CD4-positive, alpha-beta memory T cell (primary cell): ENCODE measurements at regions of chr4 and their contacts with region 1.

Region 1: DNA sequence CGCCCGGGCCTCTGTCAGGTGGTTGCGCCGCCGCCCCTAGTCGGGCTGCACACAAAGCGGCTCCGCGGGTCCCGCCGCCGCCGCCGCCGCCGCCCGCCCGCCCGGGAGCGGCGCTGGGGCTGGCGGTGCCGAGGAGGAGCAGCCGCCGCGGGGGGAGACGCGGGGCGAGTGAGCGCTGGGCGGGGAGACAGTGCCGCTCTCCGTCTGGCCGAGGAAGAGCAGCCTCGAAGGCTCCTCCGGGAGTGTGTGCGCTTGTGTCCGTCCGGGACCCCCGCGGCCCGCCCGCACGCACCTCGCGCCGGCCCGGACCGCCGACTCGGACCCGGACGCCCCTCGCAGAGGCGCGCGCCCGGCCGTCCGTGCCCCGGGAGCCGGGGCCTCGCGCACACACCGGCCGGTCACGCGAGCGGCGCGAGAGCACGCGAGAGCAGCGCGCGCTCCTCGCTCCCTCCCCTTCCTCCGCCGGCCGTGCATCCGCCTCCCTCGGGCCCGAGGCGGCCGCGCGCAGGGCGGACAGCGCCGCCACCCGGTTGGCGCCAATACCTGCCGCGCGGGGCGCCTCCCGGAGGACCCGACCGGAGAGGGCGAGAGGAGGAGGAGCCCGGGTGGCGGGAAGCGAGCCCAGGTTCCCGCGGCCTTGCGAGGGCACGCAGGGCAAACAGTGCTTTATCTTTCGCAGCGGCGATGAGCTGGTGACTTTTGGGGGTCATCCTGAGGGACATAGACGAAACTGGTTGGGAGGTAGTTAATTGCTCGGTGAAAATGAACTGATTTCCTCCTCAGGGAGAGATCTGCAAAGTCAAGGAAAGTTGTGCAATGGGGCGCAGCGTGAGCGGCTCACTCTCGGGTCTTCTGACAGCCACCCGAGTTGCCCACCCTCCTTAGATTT is at the start of gene PDS5A:
- DNase-seq: peak; percentile 86 to 95 (median 91)
- H3K4me3 ChIP-seq: peak within 1 kb of the TSS; percentile 22 to 66
- H3K4me3 Mint-ChIP-seq: peak within 1 kb of the TSS; percentile 87 to 92 (median 90)
- H3K27ac ChIP-seq: peak within 1 kb of the TSS; percentile 92
- H3K27ac Mint-ChIP-seq: peak within 1 kb of the TSS; percentile 95 to 97 (median 96)
- H3K4me1 ChIP-seq: peaks cover 39% of the 10 kb centered on the region
- H3K4me1 Mint-ChIP-seq: peaks cover 23 to 40% (median 31%) of the 10 kb centered on the region in 4 donors
- H3K27me3 ChIP-seq: no peaks in the 10 kb centered on the region
- H3K27me3 Mint-ChIP-seq: no peaks in the 10 kb centered on the region
- total RNA-seq, gene PDS5A: 96.9 to 97.6 TPM

Region 2: DNA sequence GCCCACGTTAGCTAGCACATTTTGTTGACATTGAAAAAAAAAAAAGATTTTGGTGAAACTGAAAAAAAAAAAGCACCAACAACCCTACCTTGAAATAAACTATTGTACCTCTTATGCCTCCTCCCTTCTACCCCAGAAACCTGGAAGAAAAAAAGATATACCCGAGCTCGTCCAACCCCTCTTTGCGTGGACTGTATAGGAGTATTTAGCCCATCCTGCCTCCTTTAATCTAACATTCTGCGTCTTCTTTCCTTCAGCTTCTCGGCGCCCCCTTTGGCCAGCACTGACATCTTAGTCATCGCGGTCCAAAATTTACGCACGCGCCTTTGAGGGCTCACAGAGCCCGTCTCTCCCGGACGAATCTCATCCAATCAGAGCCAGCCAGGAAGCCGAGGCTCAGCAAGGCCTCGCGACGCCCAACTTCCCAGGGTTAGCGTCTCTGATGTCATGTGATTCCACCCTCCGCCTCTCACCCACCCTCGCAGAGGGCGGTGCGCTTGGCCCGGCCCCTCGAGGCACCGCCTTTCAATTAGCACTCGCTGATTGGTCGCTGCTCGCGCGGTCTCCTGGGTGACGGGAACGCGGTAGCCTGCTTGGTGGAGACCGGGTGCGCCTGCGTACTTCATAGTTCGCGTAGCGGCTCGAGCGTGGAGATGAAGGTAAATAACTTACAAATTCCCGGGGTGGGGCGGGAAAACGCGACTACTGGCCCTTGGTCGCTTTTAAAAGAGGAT is 795.7 kb before region 1 on chr4 and contains the start of gene WDR19:
- CTCF ChIA-PET with region 1: no interaction called
- POLR2A ChIA-PET with region 1: no interaction called
- intact Hi-C with region 1: loop called (anchors 5 kb)
- DNase-seq: peak; percentile 98 to 99 (median 98)
- H3K4me3 ChIP-seq: peak within 1 kb of the TSS; percentile 78 to 95
- H3K4me3 Mint-ChIP-seq: no peak within 1 kb of the TSS
- H3K27ac ChIP-seq: peak within 1 kb of the TSS; percentile 65
- H3K27ac Mint-ChIP-seq: peak within 1 kb of the TSS in 2 of 7 donors; percentile 4 to 39
- H3K4me1 ChIP-seq: peaks cover 12% of the 10 kb centered on the region
- H3K4me1 Mint-ChIP-seq: peaks cover 3 to 9% (median 5%) of the 10 kb centered on the region in 4 donors
- H3K27me3 ChIP-seq: no peaks in the 10 kb centered on the region
- H3K27me3 Mint-ChIP-seq: peaks cover under 1 to 9% of the 10 kb centered on the region in 2 donors
- total RNA-seq, gene WDR19: 31.6 to 36.8 TPM

Region 3: GRCh38 chr4:39469429-39470077 is 508.2 kb before region 1 on chr4:
- CTCF ChIA-PET with region 1: interaction called, 20 read pairs
- POLR2A ChIA-PET with region 1: interaction called, 3 read pairs
- intact Hi-C with region 1: loop called (anchors 1 kb)
- DNase-seq: peak in 4 of 5 donors; percentile 45 to 58 (median 50)
- H3K4me3 ChIP-seq: no peak overlapping the region
- H3K4me3 Mint-ChIP-seq: no peak overlapping the region
- H3K27ac ChIP-seq: no peak overlapping the region
- H3K27ac Mint-ChIP-seq: peak overlapping the region in 3 of 7 donors; percentile 11 to 29 (median 22)
- H3K4me1 ChIP-seq: no peaks in the 10 kb centered on the region
- H3K4me1 Mint-ChIP-seq: peaks cover 0 to 1% (median 0%) of the 10 kb centered on the region in 4 donors
- H3K27me3 ChIP-seq: no peaks in the 10 kb centered on the region
- H3K27me3 Mint-ChIP-seq: no peaks in the 10 kb centered on the region

Region 4: GRCh38 chr4:39697740-39698423 is 279.9 kb before region 1 on chr4 and contains the start of gene UBE2K:
- CTCF ChIA-PET with region 1: interaction called, 16 read pairs
- POLR2A ChIA-PET with region 1: interaction called, 19 read pairs
- intact Hi-C with region 1: loop called (anchors 1 kb)
- DNase-seq: peak; percentile 86 to 93 (median 91)
- H3K4me3 ChIP-seq: peak within 1 kb of the TSS; percentile 79 to 93
- H3K4me3 Mint-ChIP-seq: peak within 1 kb of the TSS; percentile 96 to 100 (median 98)
- H3K27ac ChIP-seq: peak within 1 kb of the TSS; percentile 88
- H3K27ac Mint-ChIP-seq: peak within 1 kb of the TSS; percentile 94 to 100 (median 99)
- H3K4me1 ChIP-seq: peaks cover 50% of the 10 kb centered on the region
- H3K4me1 Mint-ChIP-seq: peaks cover 27 to 54% (median 37%) of the 10 kb centered on the region in 4 donors
- H3K27me3 ChIP-seq: no peaks in the 10 kb centered on the region
- H3K27me3 Mint-ChIP-seq: no peaks in the 10 kb centered on the region
- total RNA-seq, gene UBE2K: 45.0 to 51.2 TPM

Region 5: GRCh38 chr4:39933671-39934590 is 43.8 kb before region 1 on chr4:
- CTCF ChIA-PET with region 1: interaction called, 4 read pairs
- POLR2A ChIA-PET with region 1: interaction called, 3 read pairs
- intact Hi-C with region 1: loop called (anchors 5 kb)
- DNase-seq: no peak
- H3K4me3 ChIP-seq: no peak overlapping the region
- H3K4me3 Mint-ChIP-seq: peak overlapping the region in 7 of 8 donors; percentile 55 to 82 (median 69)
- H3K27ac ChIP-seq: peak overlapping the region; percentile 35
- H3K27ac Mint-ChIP-seq: peak overlapping the region; percentile 30 to 89 (median 85)
- H3K4me1 ChIP-seq: peaks cover 58% of the 10 kb centered on the region
- H3K4me1 Mint-ChIP-seq: peaks cover 50 to 76% (median 62%) of the 10 kb centered on the region in 4 donors
- H3K27me3 ChIP-seq: no peaks in the 10 kb centered on the region
- H3K27me3 Mint-ChIP-seq: no peaks in the 10 kb centered on the region

Region 6: GRCh38 chr4:39998659-39999345 is 21.1 kb after region 1 on chr4:
- CTCF ChIA-PET with region 1: no interaction called
- POLR2A ChIA-PET with region 1: no interaction called
- intact Hi-C with region 1: no loop called
- DNase-seq: no peak
- H3K4me3 ChIP-seq: no peak overlapping the region
- H3K4me3 Mint-ChIP-seq: no peak overlapping the region
- H3K27ac ChIP-seq: no peak overlapping the region
- H3K27ac Mint-ChIP-seq: no peak overlapping the region
- H3K4me1 ChIP-seq: no peaks in the 10 kb centered on the region
- H3K4me1 Mint-ChIP-seq: peaks cover 0 to 1% (median 0%) of the 10 kb centered on the region in 4 donors
- H3K27me3 ChIP-seq: no peaks in the 10 kb centered on the region
- H3K27me3 Mint-ChIP-seq: peaks cover 0 to 4% of the 10 kb centered on the region in 2 donors